Psoas muscle (tissue), 8 donors: ENCODE measurements at regions of chr9 and their contacts with region 1.

Region 1: DNA sequence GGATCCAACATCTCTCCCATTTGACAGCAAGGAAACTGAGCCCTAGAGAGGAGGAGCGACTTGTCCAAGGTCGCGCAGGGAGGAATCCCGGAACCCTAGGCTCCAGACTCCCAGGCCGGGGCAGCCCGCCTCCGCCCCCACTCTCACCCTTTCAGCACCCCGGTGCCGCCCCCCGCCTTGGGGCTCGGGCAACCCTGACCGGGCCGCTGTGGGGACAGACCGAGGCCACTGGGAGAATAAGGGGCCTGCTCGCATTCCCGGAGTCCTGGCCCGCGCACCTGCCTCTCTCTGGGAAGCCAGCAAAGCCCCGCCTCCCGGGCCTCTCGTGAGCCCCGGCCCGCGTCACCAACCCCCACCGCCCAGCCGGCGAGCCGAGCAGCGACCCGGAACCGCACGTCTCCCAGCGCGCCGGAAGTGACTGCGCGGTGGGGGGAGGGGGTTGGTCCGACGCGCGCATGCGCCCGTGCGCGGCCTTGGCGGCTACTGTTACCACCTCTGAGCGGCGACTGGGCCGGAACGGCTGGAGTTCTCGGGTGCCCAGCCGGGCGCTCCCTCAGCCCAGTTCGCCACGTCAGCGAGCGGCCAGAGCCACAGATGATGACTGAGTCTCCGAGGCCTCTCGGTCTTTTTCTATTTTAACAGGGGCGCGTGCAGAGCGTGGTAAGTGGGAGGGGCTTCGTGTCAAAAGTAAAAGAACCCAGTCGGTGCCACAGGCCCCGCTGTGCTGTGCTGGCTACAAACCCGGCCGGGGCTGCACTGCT is at the start of gene GOLGA1:
- DNase-seq: peak; percentile 97 to 98
- ATAC-seq: peak; percentile 96 to 98 (median 97)
- H3K4me3 ChIP-seq: peak within 1 kb of the TSS; percentile 86
- H3K27ac ChIP-seq: peak within 1 kb of the TSS; percentile 99
- H3K4me1 ChIP-seq: peaks cover 21% of the 10 kb centered on the region
- H3K27me3 ChIP-seq: no peaks in the 10 kb centered on the region
- CTCF ChIP-seq: no peak
- total RNA-seq, gene GOLGA1: 13.3 to 23.0 (median 17.0) TPM

Region 2: GRCh38 chr9:124868511-124869465 is 72.1 kb before region 1 on chr9:
- intact Hi-C with region 1: loop called in 1 of 2 experiments (anchors 2 kb)
- DNase-seq: peak; percentile 90 to 94
- ATAC-seq: peak; percentile 90 to 93 (median 92)
- H3K4me3 ChIP-seq: peak overlapping the region; percentile 93
- H3K27ac ChIP-seq: peak overlapping the region; percentile 99
- H3K4me1 ChIP-seq: peaks cover 43% of the 10 kb centered on the region
- H3K27me3 ChIP-seq: no peaks in the 10 kb centered on the region
- CTCF ChIP-seq: peak; percentile 11

Region 3: GRCh38 chr9:124975131-124975530 is 34.3 kb after region 1 on chr9:
- intact Hi-C with region 1: no loop called
- DNase-seq: no peak
- ATAC-seq: no peak
- H3K4me3 ChIP-seq: no peak overlapping the region
- H3K27ac ChIP-seq: no peak overlapping the region
- H3K4me1 ChIP-seq: no peaks in the 10 kb centered on the region
- H3K27me3 ChIP-seq: no peaks in the 10 kb centered on the region
- CTCF ChIP-seq: no peak